A549 (cell line): ENCODE measurements at regions of chr1 and their contacts with region 1.

Region 1: DNA sequence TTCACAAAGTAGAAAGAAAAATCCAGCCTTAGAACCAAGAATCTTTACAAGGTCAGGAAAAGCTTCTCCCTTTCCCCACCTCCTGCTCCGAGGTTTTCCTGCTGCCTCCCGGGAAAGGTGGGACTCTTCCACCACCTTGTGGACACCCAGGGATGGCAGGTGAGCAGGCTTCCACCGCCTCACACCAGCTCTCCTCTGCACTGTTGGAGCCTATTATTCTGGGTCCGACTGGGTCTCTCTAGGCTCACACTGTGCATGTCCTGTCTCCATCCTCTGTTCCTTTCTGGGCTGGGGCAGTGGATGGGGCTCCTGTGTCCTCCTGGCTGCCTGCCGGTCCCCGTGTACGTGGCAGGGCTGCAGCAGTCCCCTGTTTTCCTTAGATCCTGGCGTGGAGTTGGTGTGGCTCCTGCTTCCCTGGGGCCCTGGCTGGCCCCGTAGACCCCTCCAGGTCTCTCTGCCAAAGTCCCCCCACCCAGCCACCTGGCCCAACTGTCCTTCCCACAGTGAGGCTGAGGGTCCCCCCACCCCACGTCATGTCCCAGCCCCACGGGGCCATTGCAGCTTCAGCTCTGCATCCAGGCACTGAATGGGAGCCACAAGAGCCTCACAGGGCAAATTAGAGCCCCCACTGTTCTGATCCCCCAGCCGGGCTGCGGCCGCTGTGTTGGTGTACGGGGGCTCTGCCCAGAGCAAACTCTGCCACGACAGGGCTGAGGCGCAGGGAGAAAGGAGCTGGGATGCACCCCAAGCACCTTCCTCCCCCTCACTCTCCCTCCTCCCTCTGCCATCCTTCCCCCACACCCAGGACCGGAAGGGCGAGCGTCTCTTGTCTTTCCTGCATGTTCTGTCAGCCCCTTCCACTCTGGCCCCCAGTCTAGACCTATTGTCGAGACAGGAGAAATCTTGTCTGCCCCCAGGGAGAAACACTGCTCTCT is 3.3 kb upstream of the SLC45A1 start:
- DNase-seq: peak; percentile 78 to 80
- ATAC-seq: peak; percentile 87 to 89
- H3K4me3 ChIP-seq: no peak overlapping the region
- H3K27ac ChIP-seq: peak overlapping the region; percentile 90 to 92
- H3K4me1 ChIP-seq: peaks cover 38% of the 10 kb centered on the region
- CTCF ChIP-seq: peak; percentile 76
- EP300 ChIP-seq: no peak
- POLR2A ChIP-seq: no peak
- RAD21 ChIP-seq: peak; percentile 99

Region 2: DNA sequence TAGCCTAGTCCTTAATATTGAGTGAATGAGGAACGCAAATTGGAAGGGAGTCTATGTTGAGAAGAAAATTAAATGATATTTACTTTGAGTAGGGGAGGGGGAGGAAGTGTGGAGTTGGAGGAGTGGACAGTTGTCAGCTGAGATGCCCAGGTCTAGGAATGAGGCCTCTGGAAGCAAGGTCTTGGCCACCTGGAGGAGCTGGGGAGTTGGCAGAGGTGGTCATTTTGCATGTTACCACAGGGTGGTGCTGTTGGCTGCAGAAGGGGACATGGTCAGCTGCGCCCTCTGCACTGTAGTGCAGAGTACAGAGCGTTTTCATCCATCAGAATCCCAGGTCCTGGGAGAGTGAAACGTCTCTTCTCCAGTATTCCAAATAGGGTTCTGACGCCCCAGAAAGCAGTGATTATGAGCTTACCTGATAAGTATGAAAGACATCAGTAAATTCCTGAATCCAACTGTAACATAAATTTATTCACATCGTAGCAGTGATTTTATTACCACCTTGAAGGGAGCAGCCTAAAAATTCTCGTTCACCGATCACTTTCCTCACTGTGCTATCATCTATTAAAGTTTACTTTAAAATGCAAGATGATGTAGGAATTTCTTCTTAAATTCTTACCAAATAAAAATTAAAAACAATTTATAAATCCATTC is 339.3 kb before region 1 on chr1:
- CTCF ChIA-PET with region 1: interaction called, 145 read pairs
- POLR2A ChIA-PET with region 1: interaction called, 8 read pairs
- DNase-seq: peak; percentile 70 to 86
- ATAC-seq: peak; percentile 100
- H3K4me3 ChIP-seq: no peak overlapping the region
- H3K27ac ChIP-seq: peak overlapping the region in 1 of 2 experiments; percentile 31; a peak in 1 of 6 replicates
- H3K4me1 ChIP-seq: 0 out of 3 replicates have a peak, but pooled peaks cover 3% of the 10 kb centered on the region
- CTCF ChIP-seq: peak; percentile 89
- EP300 ChIP-seq: no peak
- POLR2A ChIP-seq: no peak
- RAD21 ChIP-seq: peak; percentile 87

Region 3: DNA sequence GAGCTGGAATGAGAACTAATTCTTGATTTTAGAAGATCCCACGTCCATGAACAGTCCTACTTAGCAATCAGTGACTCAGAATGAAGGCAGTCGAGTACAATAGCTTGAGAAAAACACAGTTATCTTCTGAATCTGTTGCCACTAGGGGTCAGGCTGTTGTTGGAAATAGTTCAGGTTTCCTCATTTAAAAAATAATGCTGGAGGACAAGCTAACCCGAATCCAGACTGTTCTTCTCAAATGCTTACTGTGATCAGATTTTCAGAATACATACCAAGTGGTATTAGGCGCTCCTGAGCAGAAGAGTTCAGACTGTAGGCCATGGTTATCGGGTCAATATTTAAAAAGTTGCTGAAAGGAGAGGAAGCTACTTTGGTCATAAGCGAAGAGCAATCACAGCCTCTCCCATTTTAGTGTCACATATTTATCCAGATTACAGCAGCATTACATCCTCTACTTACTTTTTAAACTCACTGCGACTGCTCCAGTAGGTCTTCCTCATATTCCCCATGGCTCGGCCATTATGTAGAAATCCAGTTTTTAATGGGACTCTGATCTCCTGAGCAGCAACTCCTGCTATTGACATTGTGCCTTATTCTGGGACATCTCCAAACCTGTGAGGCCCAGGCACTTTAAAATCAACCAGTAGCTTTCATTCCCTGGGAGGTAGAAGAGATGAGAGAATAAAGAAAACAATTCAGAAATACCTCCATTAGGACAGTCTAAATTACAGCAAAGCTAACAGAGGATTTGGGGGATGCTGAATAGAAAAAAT is 299.4 kb before region 1 on chr1:
- CTCF ChIA-PET with region 1: interaction called, 172 read pairs
- POLR2A ChIA-PET with region 1: interaction called, 13 read pairs
- DNase-seq: peak; percentile 22 to 72
- ATAC-seq: peak; percentile 41 to 45; a peak in 4 of 6 replicates
- H3K4me3 ChIP-seq: peak overlapping the region; percentile 26; the same call in 1 of the 3 replicates
- H3K27ac ChIP-seq: peak overlapping the region; percentile 68 to 82
- H3K4me1 ChIP-seq: peaks cover 100% of the 10 kb centered on the region
- CTCF ChIP-seq: peak; percentile 58
- EP300 ChIP-seq: no peak
- POLR2A ChIP-seq: no peak
- RAD21 ChIP-seq: peak; percentile 73 to 77

Region 4: GRCh38 chr1:8061210-8061609 is 253.4 kb before region 1 on chr1:
- CTCF ChIA-PET with region 1: interaction called, 16 read pairs
- POLR2A ChIA-PET with region 1: no interaction called
- DNase-seq: peak; percentile 88 to 97
- ATAC-seq: peak; percentile 96 to 99
- H3K4me3 ChIP-seq: no peak overlapping the region
- H3K27ac ChIP-seq: peak overlapping the region; percentile 92 to 99
- H3K4me1 ChIP-seq: peaks cover 57% of the 10 kb centered on the region
- CTCF ChIP-seq: no peak
- EP300 ChIP-seq: peak; percentile 77; a peak in 3 of 5 replicates
- POLR2A ChIP-seq: no peak
- RAD21 ChIP-seq: peak; percentile 42 to 55

Region 5: DNA sequence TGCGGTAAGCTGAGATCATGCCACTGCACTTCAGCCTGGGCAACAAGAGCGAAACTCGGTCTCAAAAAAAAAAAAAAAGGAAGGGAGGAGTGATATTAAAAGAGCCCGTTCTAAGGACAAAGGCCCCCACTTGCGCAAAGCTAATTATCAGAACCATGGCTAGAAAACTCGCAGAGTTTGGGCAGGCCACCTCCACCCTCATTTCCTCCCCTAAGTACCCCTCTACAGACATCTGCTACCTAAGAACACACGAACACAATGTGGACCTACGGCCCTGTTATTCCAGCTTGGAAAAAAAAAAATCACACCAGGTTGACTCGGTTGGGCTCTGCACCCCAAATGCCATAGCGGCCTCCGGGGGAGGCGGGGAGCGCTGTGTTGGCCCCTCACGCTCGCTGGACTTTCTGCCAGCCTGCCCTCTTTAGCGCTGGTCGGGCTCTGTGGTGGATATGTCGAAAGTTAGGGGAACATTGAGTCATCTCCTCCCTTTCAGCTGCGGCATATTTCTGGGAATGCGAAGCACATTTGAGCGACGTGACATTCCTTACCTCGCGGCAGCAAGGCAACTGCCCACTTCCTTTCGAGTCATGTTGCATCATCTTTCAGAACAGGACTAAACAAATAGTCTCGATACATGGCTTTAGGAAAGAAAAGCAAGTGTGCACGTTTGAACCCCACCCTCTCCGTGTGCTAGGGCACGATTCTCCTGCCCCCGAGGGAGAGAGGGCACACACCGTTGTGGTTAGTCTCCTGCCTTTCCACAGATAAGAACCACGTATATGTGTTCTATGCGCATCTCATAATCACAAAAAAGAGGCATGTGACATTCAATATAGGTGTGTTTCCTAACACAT is 102.8 kb before region 1 on chr1:
- CTCF ChIA-PET with region 1: interaction called, 14 read pairs
- POLR2A ChIA-PET with region 1: no interaction called
- DNase-seq: peak; percentile 57 to 95
- ATAC-seq: peak; percentile 93 to 98
- H3K4me3 ChIP-seq: no peak overlapping the region
- H3K27ac ChIP-seq: peak overlapping the region; percentile 95 to 98
- H3K4me1 ChIP-seq: peaks cover 47% of the 10 kb centered on the region
- CTCF ChIP-seq: no peak
- EP300 ChIP-seq: peak; percentile 93 to 96
- POLR2A ChIP-seq: no peak
- RAD21 ChIP-seq: peak in 1 of 2 experiments; percentile 65; a peak in 3 of 5 replicates

Region 6: DNA sequence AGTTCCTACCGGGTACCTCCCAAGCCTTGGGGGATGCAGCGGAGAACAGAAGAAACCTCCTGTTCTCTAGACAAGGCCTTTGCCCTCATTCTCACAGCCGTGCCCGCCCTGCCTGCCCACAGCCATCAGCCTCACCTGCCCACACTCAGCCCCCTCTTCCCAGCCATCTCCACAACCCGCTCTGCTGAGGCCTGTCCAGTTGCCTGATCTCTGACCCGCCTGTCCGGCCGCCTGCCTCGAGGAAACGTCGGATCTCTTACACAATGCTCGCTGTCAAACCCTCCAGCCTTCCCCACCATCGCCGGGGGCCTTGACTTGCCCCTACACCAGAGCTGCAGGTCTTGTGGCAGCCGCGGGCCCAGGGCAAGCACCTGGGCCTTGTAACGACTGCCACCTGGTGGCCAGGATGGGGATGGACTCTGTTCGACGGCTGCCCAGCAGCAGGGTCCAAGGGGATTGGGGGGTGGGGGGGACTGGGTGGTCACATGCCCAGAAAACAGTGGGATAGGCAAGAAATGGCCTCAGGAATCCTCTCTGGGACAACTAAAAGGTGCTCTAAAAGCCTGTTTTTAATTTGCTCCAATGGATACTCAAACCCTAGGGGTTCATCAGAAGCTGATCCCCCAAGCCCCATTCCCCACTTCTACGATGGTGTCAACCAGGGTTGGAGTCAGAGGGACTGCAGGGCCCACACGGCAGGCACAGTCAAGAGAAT is 34.3 kb after region 1 on chr1:
- CTCF ChIA-PET with region 1: interaction called, 31 read pairs
- POLR2A ChIA-PET with region 1: no interaction called
- DNase-seq: peak; percentile 56 to 58
- ATAC-seq: peak; percentile 60 to 75; a peak in 5 of 6 replicates
- H3K4me3 ChIP-seq: no peak overlapping the region
- H3K27ac ChIP-seq: peak overlapping the region; percentile 73 to 82; a peak in 5 of 6 replicates
- H3K4me1 ChIP-seq: peaks cover 17% of the 10 kb centered on the region
- CTCF ChIP-seq: peak; percentile 78
- EP300 ChIP-seq: no peak
- POLR2A ChIP-seq: no peak
- RAD21 ChIP-seq: peak; percentile 87 to 90